HCT116 (cell line): ENCODE measurements at regions of chr3 and their contacts with region 1.

Region 1: GRCh38 chr3:129824926-129825541 is 68.5 kb downstream of the TMCC1 start:
- DNase-seq: peak; percentile 58
- ATAC-seq: peak; percentile 82
- H3K4me3 ChIP-seq: no peak overlapping the region
- H3K27ac ChIP-seq: no peak overlapping the region
- H3K4me1 ChIP-seq: peaks cover 0 to 11% of the 10 kb centered on the region in 2 experiments; a peak in 3 of 4 replicates
- H3K27me3 ChIP-seq: no peaks in the 10 kb centered on the region
- CTCF ChIP-seq: peak; percentile 59 to 94 (median 80)
- POLR2A ChIP-seq: no peak
- RAD21 ChIP-seq: peak; percentile 96

Region 2: GRCh38 chr3:129383292-129383860 is 441.7 kb before region 1 on chr3:
- CTCF ChIA-PET with region 1: interaction called, 4 read pairs
- POLR2A ChIA-PET with region 1: no interaction called
- RAD21 ChIA-PET with region 1: no interaction called
- intact Hi-C with region 1: loop called (anchors 2 kb)
- DNase-seq: peak; percentile 19
- ATAC-seq: peak; percentile 99
- H3K4me3 ChIP-seq: no peak overlapping the region
- H3K27ac ChIP-seq: no peak overlapping the region
- H3K4me1 ChIP-seq: peaks cover 7 to 12% of the 10 kb centered on the region in 2 experiments
- H3K27me3 ChIP-seq: no peaks in the 10 kb centered on the region
- CTCF ChIP-seq: peak; percentile 59 to 92 (median 85); a peak in 5 of 6 replicates
- POLR2A ChIP-seq: no peak
- RAD21 ChIP-seq: peak; percentile 78

Region 3: GRCh38 chr3:129399145-129399894 is 425.7 kb before region 1 on chr3:
- CTCF ChIA-PET with region 1: no interaction called
- POLR2A ChIA-PET with region 1: no interaction called
- RAD21 ChIA-PET with region 1: no interaction called
- intact Hi-C with region 1: loop called (anchors 5 kb)
- DNase-seq: peak; percentile 95
- ATAC-seq: peak; percentile 85
- H3K4me3 ChIP-seq: peak overlapping the region; percentile 86 to 95
- H3K27ac ChIP-seq: peak overlapping the region; percentile 63
- H3K4me1 ChIP-seq: peaks cover 5 to 19% of the 10 kb centered on the region in 2 experiments; a peak in 3 of 4 replicates
- H3K27me3 ChIP-seq: no peaks in the 10 kb centered on the region
- CTCF ChIP-seq: peak; percentile 62 to 80 (median 76); a peak in 5 of 6 replicates
- POLR2A ChIP-seq: no peak
- RAD21 ChIP-seq: peak; percentile 18

Region 4: GRCh38 chr3:129490242-129491045 is 334.6 kb before region 1 on chr3:
- CTCF ChIA-PET with region 1: interaction called, 14 read pairs
- POLR2A ChIA-PET with region 1: no interaction called
- RAD21 ChIA-PET with region 1: interaction called, 5 to 6 read pairs
- intact Hi-C with region 1: loop called (anchors 1 kb)
- DNase-seq: peak; percentile 49
- ATAC-seq: peak; percentile 92
- H3K4me3 ChIP-seq: no peak overlapping the region
- H3K27ac ChIP-seq: no peak overlapping the region
- H3K4me1 ChIP-seq: peaks cover 5 to 21% of the 10 kb centered on the region in 2 experiments
- H3K27me3 ChIP-seq: no peaks in the 10 kb centered on the region
- CTCF ChIP-seq: peak; percentile 84 to 87 (median 86)
- POLR2A ChIP-seq: no peak
- RAD21 ChIP-seq: peak; percentile 95

Region 5: DNA sequence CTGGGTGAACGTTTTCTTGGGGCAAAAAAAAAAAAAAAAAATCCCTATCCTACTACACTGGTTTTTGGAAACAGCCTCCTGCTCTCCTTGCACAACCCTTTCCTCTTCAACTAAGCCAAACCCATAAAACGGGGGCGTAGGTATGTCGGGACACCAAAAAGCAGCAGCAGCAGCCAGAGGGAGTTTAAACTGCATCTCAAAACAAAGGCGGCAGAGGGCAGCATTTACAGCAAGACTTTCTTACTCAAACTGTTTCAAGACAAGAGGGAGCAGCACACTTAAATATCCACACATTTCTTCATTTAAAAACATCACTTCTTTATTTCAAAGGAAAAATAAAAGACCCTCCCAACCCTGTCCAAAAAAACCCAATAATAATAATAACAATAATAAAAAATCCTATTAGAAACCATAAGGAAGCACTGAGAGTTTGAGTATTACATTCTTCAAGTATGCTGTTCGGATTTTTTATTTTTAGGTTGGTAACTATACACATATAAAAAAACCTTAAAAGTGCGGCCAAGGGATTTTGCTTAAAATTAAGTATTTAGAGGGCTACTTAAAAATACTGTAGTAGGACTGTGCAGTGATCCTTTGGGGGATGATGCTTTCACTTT is 174.7 kb before region 1 on chr3:
- CTCF ChIA-PET with region 1: interaction called, 11 read pairs
- POLR2A ChIA-PET with region 1: no interaction called
- RAD21 ChIA-PET with region 1: no interaction called
- intact Hi-C with region 1: loop called (anchors 1 kb)
- DNase-seq: peak; percentile 65
- ATAC-seq: peak; percentile 58
- H3K4me3 ChIP-seq: no peak overlapping the region
- H3K27ac ChIP-seq: peak overlapping the region; percentile 77
- H3K4me1 ChIP-seq: peaks cover 37 to 43% of the 10 kb centered on the region in 2 experiments
- H3K27me3 ChIP-seq: no peaks in the 10 kb centered on the region
- CTCF ChIP-seq: peak; percentile 66 to 93 (median 80)
- POLR2A ChIP-seq: no peak
- RAD21 ChIP-seq: peak; percentile 92

Region 6: GRCh38 chr3:129673882-129674797 is 150.9 kb before region 1 on chr3:
- CTCF ChIA-PET with region 1: no interaction called
- POLR2A ChIA-PET with region 1: no interaction called
- RAD21 ChIA-PET with region 1: no interaction called
- intact Hi-C with region 1: no loop called
- DNase-seq: no peak
- ATAC-seq: no peak
- H3K4me3 ChIP-seq: no peak overlapping the region
- H3K27ac ChIP-seq: no peak overlapping the region
- H3K4me1 ChIP-seq: peaks cover 0 to 5% of the 10 kb centered on the region in 2 experiments; a peak in 3 of 4 replicates
- H3K27me3 ChIP-seq: no peaks in the 10 kb centered on the region
- CTCF ChIP-seq: no peak
- POLR2A ChIP-seq: no peak
- RAD21 ChIP-seq: no peak

Region 7: DNA sequence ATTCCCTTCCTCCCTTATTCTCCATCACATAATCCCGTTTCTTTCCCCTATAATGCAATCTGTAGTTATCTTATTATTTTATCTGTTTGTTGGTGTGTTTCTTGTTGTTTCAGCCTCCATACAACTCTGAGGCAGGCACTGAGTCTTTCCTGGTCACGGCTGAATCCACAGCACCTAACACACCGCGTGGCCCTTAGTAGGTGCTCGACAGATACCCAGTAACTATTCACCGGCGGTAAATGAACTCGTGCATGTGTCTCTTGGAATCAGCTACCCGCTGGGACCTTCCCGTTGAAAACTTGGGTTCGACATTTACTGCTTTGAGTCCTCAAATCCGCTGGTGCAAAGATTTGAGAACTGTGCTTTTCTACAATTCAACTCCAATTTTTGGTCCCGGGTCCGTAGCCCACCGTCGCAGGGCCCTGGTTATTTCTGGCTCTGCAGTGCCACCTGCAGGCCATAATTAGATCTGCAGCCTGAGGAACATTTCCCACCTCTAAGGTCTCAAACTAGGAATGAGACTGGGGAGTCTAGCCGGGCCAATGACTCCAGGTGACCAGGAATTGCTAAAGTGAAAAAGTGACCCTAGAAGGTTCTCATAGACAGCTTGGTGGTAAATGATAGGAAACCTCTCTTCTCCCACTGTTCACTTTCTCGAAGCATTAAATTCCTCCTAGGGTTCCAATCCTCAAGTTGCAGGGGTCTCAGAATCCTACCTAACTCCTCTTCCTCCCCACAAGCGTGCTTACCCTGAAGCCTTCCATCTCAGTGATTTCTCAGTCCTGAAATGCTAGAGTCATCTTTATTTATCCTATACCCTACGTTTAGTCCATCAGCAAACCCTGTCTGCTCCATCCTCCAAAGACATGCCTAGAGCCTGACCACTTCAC is 109.4 kb after region 1 on chr3:
- CTCF ChIA-PET with region 1: no interaction called
- POLR2A ChIA-PET with region 1: no interaction called
- RAD21 ChIA-PET with region 1: interaction called in 1 of 2 experiments, 4 read pairs
- intact Hi-C with region 1: loop called (anchors 5 kb)
- DNase-seq: peak; percentile 12
- ATAC-seq: peak; percentile 82
- H3K4me3 ChIP-seq: no peak overlapping the region
- H3K27ac ChIP-seq: no peak overlapping the region
- H3K4me1 ChIP-seq: peaks cover 0 to 3% of the 10 kb centered on the region in 2 experiments; a peak in 1 of 4 replicates
- H3K27me3 ChIP-seq: no peaks in the 10 kb centered on the region
- CTCF ChIP-seq: peak; percentile 81 to 98 (median 91)
- POLR2A ChIP-seq: no peak
- RAD21 ChIP-seq: peak; percentile 96

Region 8: GRCh38 chr3:129961134-129961541 is 136.1 kb after region 1 on chr3:
- CTCF ChIA-PET with region 1: no interaction called
- POLR2A ChIA-PET with region 1: no interaction called
- RAD21 ChIA-PET with region 1: no interaction called
- intact Hi-C with region 1: no loop called
- DNase-seq: no peak
- ATAC-seq: peak; percentile 22; the same call in 1 of the 2 replicates
- H3K4me3 ChIP-seq: no peak overlapping the region
- H3K27ac ChIP-seq: no peak overlapping the region
- H3K4me1 ChIP-seq: no peaks in the 10 kb centered on the region
- H3K27me3 ChIP-seq: no peaks in the 10 kb centered on the region
- CTCF ChIP-seq: no peak
- POLR2A ChIP-seq: no peak
- RAD21 ChIP-seq: no peak

Region 9: GRCh38 chr3:130111185-130111864 is 286.3 kb after region 1 on chr3:
- CTCF ChIA-PET with region 1: no interaction called
- POLR2A ChIA-PET with region 1: no interaction called
- RAD21 ChIA-PET with region 1: no interaction called
- intact Hi-C with region 1: loop called (anchors 2 kb)
- DNase-seq: peak; percentile 93
- ATAC-seq: peak; percentile 99
- H3K4me3 ChIP-seq: peak overlapping the region; percentile 74 to 79
- H3K27ac ChIP-seq: peak overlapping the region; percentile 76
- H3K4me1 ChIP-seq: peaks cover 16 to 25% of the 10 kb centered on the region in 2 experiments
- H3K27me3 ChIP-seq: no peaks in the 10 kb centered on the region
- CTCF ChIP-seq: no peak
- POLR2A ChIP-seq: peak; percentile 30
- RAD21 ChIP-seq: no peak